ENCODE measurements at regions of chr3 and their contacts with region 1.

Region 1: GRCh38 chr3:32467333-32468070 is 35.1 kb downstream of the CMTM6 start:
- DNase-seq: peak; percentile 28 to 89 (median 68)
- ATAC-seq: peak; percentile 86 to 90 (median 88)
- H3K4me3 ChIP-seq: peak overlapping the region; percentile 50 to 67
- H3K4me3 Mint-ChIP-seq: peak overlapping the region; percentile 42 to 62 (median 46)
- H3K27ac ChIP-seq: peak overlapping the region; percentile 47
- H3K27ac Mint-ChIP-seq: peak overlapping the region; percentile 69 to 85
- H3K4me1 ChIP-seq: peaks cover 11 to 34% of the 10 kb centered on the region in 2 experiments
- H3K4me1 Mint-ChIP-seq: peaks cover 47 to 68% (median 60%) of the 10 kb centered on the region in 3 donors
- H3K27me3 ChIP-seq: no peaks in the 10 kb centered on the region
- H3K27me3 Mint-ChIP-seq: no peaks in the 10 kb centered on the region

Region 2: DNA sequence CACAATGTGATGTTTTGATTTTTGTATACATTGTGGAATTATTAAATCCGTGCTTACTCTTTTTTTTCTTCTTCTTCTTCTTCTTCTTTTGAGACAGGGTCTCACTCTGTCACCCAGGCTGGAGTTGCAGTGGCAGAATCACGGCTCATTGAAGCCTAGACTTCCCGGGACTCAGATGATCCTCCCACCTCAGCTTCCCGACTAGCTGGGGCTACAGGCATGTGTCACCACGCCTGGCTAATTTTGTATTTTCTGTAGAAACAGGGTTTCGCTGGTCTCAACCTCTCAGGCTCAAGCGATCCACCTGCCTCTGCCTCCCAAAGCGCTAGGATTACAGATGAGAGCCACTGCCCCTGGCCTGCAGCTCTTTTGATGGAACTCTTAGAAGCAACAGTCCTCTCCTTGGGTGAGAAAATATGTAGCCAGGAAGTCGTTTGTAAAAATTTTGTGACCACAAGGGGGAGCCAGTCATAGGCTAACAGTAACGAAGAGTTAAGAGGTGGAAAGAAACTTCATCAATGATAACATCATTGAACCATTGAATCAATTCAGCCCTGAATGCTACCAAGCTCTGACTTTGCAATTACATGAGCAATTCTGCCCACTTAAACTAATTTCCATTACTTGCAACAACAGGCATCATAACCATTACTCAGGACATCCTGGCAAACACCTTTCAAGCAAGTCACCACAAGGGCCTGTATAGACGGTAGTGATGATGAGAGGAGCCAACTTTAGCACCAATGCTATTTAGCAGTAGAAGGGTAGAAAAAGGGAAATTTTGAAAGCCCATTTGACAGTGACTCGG is 92.5 kb before region 1 on chr3:
- CTCF ChIA-PET with region 1: interaction called, 36 to 44 read pairs
- POLR2A ChIA-PET with region 1: no interaction called
- DNase-seq: peak in 32 of 35 experiments; percentile 31 to 90 (median 60)
- ATAC-seq: peak in 2 of 4 experiments; percentile 25 to 32
- H3K4me3 ChIP-seq: no peak overlapping the region
- H3K4me3 Mint-ChIP-seq: peak overlapping the region in 1 of 3 donors; percentile 32
- H3K27ac ChIP-seq: no peak overlapping the region
- H3K27ac Mint-ChIP-seq: peak overlapping the region; percentile 78 to 85
- H3K4me1 ChIP-seq: peaks cover 29 to 33% of the 10 kb centered on the region in 2 experiments
- H3K4me1 Mint-ChIP-seq: peaks cover 39 to 41% (median 41%) of the 10 kb centered on the region in 3 donors
- H3K27me3 ChIP-seq: no peaks in the 10 kb centered on the region
- H3K27me3 Mint-ChIP-seq: no peaks in the 10 kb centered on the region

Region 3: GRCh38 chr3:32391643-32392535 is 75.6 kb before region 1 on chr3 and contains the start of gene CMTM7:
- CTCF ChIA-PET with region 1: interaction called, 4 to 20 read pairs
- POLR2A ChIA-PET with region 1: no interaction called
- DNase-seq: peak in 33 of 35 experiments; percentile 24 to 73 (median 44)
- ATAC-seq: peak; percentile 61 to 67 (median 66)
- H3K4me3 ChIP-seq: peak within 1 kb of the TSS; percentile 72 to 85
- H3K4me3 Mint-ChIP-seq: peak within 1 kb of the TSS; percentile 97 to 99 (median 98)
- H3K27ac ChIP-seq: peak within 1 kb of the TSS; percentile 92
- H3K27ac Mint-ChIP-seq: peak within 1 kb of the TSS; percentile 99
- H3K4me1 ChIP-seq: peaks cover 7 to 53% of the 10 kb centered on the region in 2 experiments
- H3K4me1 Mint-ChIP-seq: peaks cover 56 to 65% (median 61%) of the 10 kb centered on the region in 3 donors
- H3K27me3 ChIP-seq: no peaks in the 10 kb centered on the region
- H3K27me3 Mint-ChIP-seq: no peaks in the 10 kb centered on the region
- total RNA-seq, gene CMTM7: 40.7 to 56.7 (median 47.8) TPM

Region 4: DNA sequence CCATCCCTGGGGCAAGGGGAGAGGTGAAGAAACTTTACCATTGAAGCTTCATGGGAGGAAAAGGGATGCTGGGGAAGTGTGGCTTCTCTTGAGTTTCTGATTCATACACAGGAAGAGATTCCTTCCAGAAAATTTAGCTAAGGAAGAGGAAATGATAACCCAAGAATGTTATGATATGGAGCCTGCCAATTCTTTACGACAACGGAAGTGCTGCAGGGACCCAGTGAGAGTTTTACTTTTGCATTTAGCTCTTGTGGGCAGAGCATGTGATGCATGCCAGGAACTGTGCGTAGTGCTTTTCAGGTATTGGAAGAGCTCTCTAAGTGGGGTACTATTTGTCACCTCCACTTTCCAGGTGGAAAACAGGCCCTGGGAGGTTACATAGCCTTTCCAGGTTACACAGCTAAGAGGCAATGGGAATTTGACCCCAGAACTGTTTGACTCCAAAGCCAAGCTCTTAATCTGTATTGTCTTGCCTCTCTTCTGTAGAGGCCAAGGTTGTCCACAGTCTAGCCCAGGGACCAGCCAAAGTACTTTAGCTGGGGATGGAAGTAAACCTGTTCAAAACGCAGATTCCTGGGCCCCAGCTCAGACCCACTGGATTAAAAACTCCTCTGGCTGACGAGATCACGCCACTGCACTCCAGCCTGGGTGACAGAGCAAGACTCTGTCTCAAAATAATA is 52.8 kb before region 1 on chr3:
- CTCF ChIA-PET with region 1: interaction called, 9 to 12 read pairs
- POLR2A ChIA-PET with region 1: no interaction called
- DNase-seq: peak in 31 of 35 experiments; percentile 28 to 74 (median 52)
- ATAC-seq: peak; percentile 84 to 96 (median 94)
- H3K4me3 ChIP-seq: no peak overlapping the region
- H3K4me3 Mint-ChIP-seq: peak overlapping the region; percentile 31 to 51 (median 42)
- H3K27ac ChIP-seq: peak overlapping the region; percentile 88
- H3K27ac Mint-ChIP-seq: peak overlapping the region; percentile 93 to 98
- H3K4me1 ChIP-seq: peaks cover 28 to 31% of the 10 kb centered on the region in 2 experiments
- H3K4me1 Mint-ChIP-seq: peaks cover 81 to 88% (median 88%) of the 10 kb centered on the region in 3 donors
- H3K27me3 ChIP-seq: no peaks in the 10 kb centered on the region
- H3K27me3 Mint-ChIP-seq: no peaks in the 10 kb centered on the region

Region 5: GRCh38 chr3:32448686-32449474 is 18.6 kb before region 1 on chr3:
- CTCF ChIA-PET with region 1: interaction called, 4 to 10 read pairs
- POLR2A ChIA-PET with region 1: interaction called, 3 to 4 read pairs
- DNase-seq: no peak
- ATAC-seq: no peak
- H3K4me3 ChIP-seq: no peak overlapping the region
- H3K4me3 Mint-ChIP-seq: no peak overlapping the region
- H3K27ac ChIP-seq: no peak overlapping the region
- H3K27ac Mint-ChIP-seq: peak overlapping the region in 1 of 2 donors; percentile 23
- H3K4me1 ChIP-seq: peaks cover 6% of the 10 kb centered on the region in 2 experiments
- H3K4me1 Mint-ChIP-seq: peaks cover 51 to 62% (median 58%) of the 10 kb centered on the region in 3 donors
- H3K27me3 ChIP-seq: no peaks in the 10 kb centered on the region
- H3K27me3 Mint-ChIP-seq: no peaks in the 10 kb centered on the region